ENCODE measurements at regions of chrX and their contacts with region 1.

Region 1: DNA sequence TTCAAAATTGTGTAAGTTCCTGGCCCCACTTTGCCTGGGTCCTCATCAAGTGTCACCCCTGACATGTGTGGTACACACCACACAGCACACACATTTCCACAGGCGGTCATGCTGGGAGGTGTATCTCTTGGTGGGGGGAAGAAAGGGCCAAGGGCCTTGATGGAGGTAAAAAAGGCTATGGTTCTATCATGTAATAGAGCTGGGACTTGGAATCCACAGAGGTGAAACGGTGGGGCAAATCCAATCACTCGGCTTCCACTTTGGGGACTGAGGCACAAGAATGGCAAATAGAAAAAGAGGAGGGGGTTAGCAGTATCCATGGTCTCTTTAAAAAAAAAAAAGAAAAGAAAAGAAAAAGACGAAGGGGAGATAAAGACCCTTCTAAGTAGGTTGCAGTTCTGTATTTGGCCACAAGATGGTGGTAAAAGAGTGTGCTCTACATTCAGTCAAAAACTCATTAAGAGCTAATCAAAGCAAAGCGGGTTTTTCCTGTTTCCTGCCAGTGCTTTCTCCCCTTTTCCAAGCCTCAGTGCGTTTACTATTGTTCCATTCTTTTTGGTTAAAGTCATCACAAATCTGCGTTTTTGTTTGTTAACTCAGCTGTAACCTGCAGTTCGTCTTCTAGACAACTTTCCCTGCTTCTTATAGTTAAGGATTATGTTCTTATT is 37.0 kb upstream of the ATP6AP2 start:
- DNase-seq: peak; percentile 29
- H3K4me3 ChIP-seq: no peak overlapping the region
- H3K27ac ChIP-seq: peak overlapping the region; percentile 61
- H3K27me3 ChIP-seq: no peaks in the 10 kb centered on the region
- CTCF ChIP-seq: peak; percentile 71

Region 2: DNA sequence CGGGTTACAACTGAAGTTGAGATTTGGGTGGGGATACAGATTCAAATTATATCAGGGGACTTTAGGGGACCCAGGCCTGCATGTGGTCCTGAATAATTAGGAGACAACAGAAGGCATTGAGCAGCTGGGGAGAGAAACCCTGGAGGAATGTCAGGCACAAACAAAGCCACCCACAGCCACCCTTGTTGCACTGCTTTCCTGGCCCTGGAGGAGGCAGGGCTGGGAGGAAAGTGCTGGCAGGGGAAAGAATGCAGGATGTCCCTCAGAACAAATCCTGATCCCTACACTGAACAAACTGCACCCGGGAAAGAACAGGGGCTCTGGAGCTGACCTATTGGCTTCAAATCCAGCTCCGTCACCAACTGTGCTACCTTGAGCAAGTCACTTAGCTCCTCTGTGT is 177.1 kb before region 1 on chrX:
- CTCF ChIA-PET with region 1: no interaction called
- POLR2A ChIA-PET with region 1: no interaction called
- DNase-seq: no peak
- H3K4me3 ChIP-seq: no peak overlapping the region
- H3K27ac ChIP-seq: no peak overlapping the region
- H3K27me3 ChIP-seq: no peaks in the 10 kb centered on the region
- CTCF ChIP-seq: no peak

Region 3: DNA sequence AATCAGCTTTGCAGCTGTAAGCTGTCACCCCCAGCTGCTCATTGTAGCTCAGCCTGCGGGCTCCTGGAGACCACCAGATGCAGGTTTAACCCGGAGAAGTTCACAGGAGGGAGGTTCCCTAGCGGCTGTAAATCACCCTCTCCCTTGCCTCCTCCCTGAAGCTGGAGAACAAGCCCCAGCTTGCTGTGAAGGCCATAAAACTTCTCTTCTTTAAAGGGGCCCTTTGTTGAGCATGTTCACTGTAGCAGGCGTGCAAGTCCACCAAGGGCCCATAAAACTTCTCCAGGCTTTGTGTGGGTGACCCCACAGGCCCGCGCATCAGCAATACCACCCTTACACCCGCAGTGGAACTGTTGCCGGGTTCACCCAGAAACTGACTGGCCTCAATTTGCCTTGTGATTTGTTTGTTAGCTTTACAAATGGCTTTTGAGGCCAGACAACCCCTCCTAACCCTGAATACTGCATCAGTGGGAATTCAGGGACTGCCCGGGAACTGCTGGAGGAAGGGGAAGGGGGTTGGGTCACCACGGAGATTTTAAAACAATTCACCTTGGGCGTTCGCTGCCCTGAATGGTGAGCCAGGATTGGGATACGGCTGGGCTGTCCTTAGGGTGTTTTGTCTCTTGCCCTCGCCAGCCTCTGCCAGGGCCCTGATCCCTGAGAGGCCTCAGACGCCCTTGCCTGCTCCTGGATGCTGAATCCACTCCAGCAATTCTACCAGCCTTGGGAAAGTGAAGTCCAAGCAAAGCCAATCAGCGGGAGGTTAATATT is 12.6 kb before region 1 on chrX:
- CTCF ChIA-PET with region 1: interaction called, 14 read pairs
- POLR2A ChIA-PET with region 1: no interaction called
- DNase-seq: no peak
- H3K4me3 ChIP-seq: no peak overlapping the region
- H3K27ac ChIP-seq: no peak overlapping the region
- H3K27me3 ChIP-seq: no peaks in the 10 kb centered on the region
- CTCF ChIP-seq: no peak

Measured in AG04450 (cell line).